PC-3 (cell line): ENCODE measurements at regions of chr1 and their contacts with region 1.

Region 1: GRCh38 chr1:105724286-105724685 is 1332.2 kb upstream of the PRMT6 start:
- DNase-seq: peak; percentile 5
- ATAC-seq: no peak; the same call in 1 of the 2 replicates
- H3K4me3 ChIP-seq: no peak overlapping the region
- H3K27ac ChIP-seq: no peak overlapping the region
- H3K4me1 ChIP-seq: no peaks in the 10 kb centered on the region
- H3K27me3 ChIP-seq: no peaks in the 10 kb centered on the region
- CTCF ChIP-seq: no peak

Region 2: DNA sequence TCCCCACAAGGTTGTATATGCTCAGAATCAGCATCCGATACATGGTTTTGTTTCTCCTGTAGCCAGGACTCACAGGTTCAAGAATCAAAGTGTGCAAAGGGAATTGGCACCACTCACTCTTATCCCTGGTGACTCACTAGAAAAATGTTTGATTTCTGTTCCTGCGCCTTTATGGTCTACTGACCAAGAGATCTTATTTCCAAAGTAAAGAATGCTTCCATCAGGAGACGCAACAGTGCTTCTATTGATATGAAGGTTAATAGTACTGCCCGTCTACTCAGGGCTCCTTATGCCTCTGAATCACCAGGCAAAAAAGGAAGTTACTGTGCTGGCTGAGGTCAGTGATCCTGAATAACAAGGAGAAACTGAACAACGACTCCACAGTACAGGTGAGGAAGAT is 59.8 kb before region 1 on chr1:
- CTCF ChIA-PET with region 1: no interaction called
- POLR2A ChIA-PET with region 1: no interaction called
- intact Hi-C with region 1: loop called (anchors 1 kb)
- DNase-seq: peak; percentile 92
- ATAC-seq: peak; percentile 98
- H3K4me3 ChIP-seq: no peak overlapping the region
- H3K27ac ChIP-seq: peak overlapping the region; percentile 55
- H3K4me1 ChIP-seq: peaks cover 22% of the 10 kb centered on the region
- H3K27me3 ChIP-seq: no peaks in the 10 kb centered on the region
- CTCF ChIP-seq: no peak

Region 3: DNA sequence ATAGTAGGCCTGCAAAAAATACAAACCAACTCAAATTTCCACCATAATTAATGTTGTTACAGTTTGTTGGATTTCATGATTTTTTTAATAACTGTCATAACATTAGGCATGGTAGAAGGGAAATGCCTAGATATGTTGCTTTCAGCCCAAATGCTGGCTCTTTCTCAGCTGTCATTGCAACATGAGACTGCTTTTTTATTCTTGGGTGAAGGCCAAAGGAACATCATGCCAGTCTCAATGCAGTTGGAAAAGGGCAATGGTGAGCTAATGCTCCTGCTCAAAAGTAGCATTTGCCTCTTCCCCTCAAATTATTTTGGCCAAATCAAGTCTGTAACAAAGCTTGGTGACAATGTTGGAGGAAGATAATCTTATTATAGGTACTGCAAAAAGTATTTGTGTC is 454.5 kb after region 1 on chr1:
- CTCF ChIA-PET with region 1: no interaction called
- POLR2A ChIA-PET with region 1: no interaction called
- intact Hi-C with region 1: no loop called
- DNase-seq: peak; percentile 5
- ATAC-seq: no peak
- H3K4me3 ChIP-seq: no peak overlapping the region
- H3K27ac ChIP-seq: no peak overlapping the region
- H3K4me1 ChIP-seq: no peaks in the 10 kb centered on the region
- H3K27me3 ChIP-seq: no peaks in the 10 kb centered on the region
- CTCF ChIP-seq: no peak